ENCODE measurements at regions of chr12 and their contacts with region 1.

Region 1: DNA sequence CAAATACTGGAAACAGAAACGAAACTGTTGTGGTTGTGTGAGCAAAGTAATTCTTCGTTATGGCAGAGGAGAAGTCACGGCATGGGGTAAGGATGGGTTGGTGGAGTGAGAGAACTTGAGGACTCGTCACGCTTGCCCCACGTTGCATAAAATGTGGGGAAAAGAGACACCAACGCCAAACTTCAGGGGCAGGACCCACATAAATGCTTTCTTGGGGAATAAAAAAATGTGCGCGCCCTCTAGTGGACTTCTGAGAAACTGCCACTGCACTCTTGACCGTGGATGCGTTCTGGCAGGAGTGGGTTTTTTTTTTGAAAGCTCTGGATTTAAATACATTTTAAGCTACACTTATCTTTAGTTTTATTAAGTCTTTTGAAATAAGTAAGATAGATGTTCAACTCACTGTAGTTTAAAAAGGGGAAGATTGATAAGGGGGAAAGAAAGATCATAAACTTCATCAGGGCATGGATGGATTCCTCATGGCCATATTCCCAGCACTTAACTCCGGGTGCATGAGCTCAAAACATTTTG is 4.1 kb upstream of the IGF1 start:
- DNase-seq: peak; percentile 9 to 70 (median 41)
- ATAC-seq: peak; percentile 38
- H3K4me3 ChIP-seq: peak overlapping the region in 1 of 2 experiments; percentile 10
- H3K4me3 Mint-ChIP-seq: peak overlapping the region; percentile 78
- H3K27ac ChIP-seq: no peak overlapping the region
- H3K27ac Mint-ChIP-seq: no peak overlapping the region
- H3K4me1 ChIP-seq: peaks cover 7% of the 10 kb centered on the region
- H3K4me1 Mint-ChIP-seq: peaks cover 4% of the 10 kb centered on the region
- H3K27me3 ChIP-seq: no peaks in the 10 kb centered on the region
- H3K27me3 Mint-ChIP-seq: peaks cover 4% of the 10 kb centered on the region
- CTCF ChIP-seq: peak; percentile 99

Region 2: DNA sequence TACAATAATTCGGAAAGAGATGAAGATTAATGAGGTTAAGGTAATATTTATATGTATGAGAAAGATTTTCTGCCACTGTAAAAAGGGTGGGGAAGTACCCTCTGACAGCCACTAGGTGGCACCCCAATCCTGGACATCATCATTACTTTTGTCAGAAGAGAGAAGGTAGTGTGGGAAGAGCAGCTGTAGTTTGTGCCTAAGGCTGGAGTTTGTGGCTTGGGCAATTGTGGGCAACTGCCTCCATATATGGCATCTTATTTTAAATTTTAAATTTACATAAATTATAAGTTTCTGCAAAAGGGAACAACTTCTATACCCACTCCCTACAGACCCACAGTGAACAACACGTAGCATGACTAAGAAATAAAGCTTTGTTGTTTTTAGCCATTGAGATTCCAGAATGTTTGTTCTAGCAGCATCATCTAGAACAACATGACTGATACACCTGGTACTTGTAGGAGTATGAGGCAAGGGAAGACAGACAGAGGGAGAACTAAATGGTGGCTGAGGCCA is 710.8 kb before region 1 on chr12:
- CTCF ChIA-PET with region 1: no interaction called
- POLR2A ChIA-PET with region 1: no interaction called
- intact Hi-C with region 1: loop called in 1 of 2 experiments (anchors 10 kb)
- DNase-seq: peak; percentile 43 to 83 (median 70)
- ATAC-seq: peak; percentile 96
- H3K4me3 ChIP-seq: no peak overlapping the region
- H3K4me3 Mint-ChIP-seq: no peak overlapping the region
- H3K27ac ChIP-seq: no peak overlapping the region
- H3K27ac Mint-ChIP-seq: no peak overlapping the region
- H3K4me1 ChIP-seq: no peaks in the 10 kb centered on the region
- H3K4me1 Mint-ChIP-seq: no peaks in the 10 kb centered on the region
- H3K27me3 ChIP-seq: no peaks in the 10 kb centered on the region
- H3K27me3 Mint-ChIP-seq: no peaks in the 10 kb centered on the region
- CTCF ChIP-seq: peak; percentile 95

Region 3: DNA sequence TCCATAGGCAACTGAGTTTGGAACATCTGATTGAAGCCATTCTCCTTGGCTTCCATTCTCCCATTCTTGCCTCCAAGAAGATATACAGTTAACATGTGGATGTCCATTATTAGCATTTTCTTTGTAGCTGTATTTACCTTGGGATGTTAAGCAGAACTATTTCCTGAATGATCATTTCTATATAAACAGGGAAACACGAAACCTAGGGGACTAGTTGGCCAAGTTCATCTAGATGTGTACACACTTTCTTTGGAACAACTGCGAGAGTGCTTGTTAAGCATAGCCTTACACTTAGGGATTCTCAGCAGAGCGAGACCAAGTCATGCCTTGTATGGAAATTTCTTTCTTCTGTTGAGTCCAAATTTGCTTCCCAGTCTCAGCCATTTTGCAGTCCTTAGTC is 565.0 kb before region 1 on chr12:
- CTCF ChIA-PET with region 1: no interaction called
- POLR2A ChIA-PET with region 1: no interaction called
- intact Hi-C with region 1: loop called in 1 of 2 experiments (anchors 1 kb)
- DNase-seq: no peak
- ATAC-seq: no peak
- H3K4me3 ChIP-seq: no peak overlapping the region
- H3K4me3 Mint-ChIP-seq: no peak overlapping the region
- H3K27ac ChIP-seq: no peak overlapping the region
- H3K27ac Mint-ChIP-seq: no peak overlapping the region
- H3K4me1 ChIP-seq: no peaks in the 10 kb centered on the region
- H3K4me1 Mint-ChIP-seq: peaks cover 7% of the 10 kb centered on the region
- H3K27me3 ChIP-seq: no peaks in the 10 kb centered on the region
- H3K27me3 Mint-ChIP-seq: no peaks in the 10 kb centered on the region
- CTCF ChIP-seq: no peak

Region 4: DNA sequence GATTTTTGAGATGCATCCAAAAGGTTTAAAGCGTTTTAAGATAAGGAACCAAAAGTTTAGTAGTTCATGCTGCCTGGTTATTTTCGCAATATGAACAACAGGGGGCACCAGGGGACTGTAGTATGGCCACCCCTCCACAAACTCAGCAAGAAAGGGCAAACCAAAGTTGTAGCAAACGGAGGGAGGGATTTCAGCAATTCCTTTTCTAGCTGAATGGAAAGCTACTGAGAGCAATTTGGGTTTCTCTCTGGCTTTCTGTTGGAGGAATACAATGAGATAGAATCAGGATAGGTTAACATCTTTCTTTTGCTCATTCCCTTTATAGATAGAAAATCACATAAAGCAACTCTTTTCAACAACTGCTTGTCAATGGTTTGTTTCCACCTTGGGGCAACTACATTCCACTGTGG is 544.6 kb before region 1 on chr12:
- CTCF ChIA-PET with region 1: interaction called, 34 read pairs
- POLR2A ChIA-PET with region 1: no interaction called
- intact Hi-C with region 1: loop called (anchors 1 kb)
- DNase-seq: peak in 8 of 9 experiments; percentile 28 to 73 (median 54)
- ATAC-seq: peak; percentile 75
- H3K4me3 ChIP-seq: no peak overlapping the region
- H3K4me3 Mint-ChIP-seq: no peak overlapping the region
- H3K27ac ChIP-seq: no peak overlapping the region
- H3K27ac Mint-ChIP-seq: no peak overlapping the region
- H3K4me1 ChIP-seq: no peaks in the 10 kb centered on the region
- H3K4me1 Mint-ChIP-seq: no peaks in the 10 kb centered on the region
- H3K27me3 ChIP-seq: no peaks in the 10 kb centered on the region
- H3K27me3 Mint-ChIP-seq: peaks cover 8% of the 10 kb centered on the region
- CTCF ChIP-seq: peak; percentile 73

Region 5: DNA sequence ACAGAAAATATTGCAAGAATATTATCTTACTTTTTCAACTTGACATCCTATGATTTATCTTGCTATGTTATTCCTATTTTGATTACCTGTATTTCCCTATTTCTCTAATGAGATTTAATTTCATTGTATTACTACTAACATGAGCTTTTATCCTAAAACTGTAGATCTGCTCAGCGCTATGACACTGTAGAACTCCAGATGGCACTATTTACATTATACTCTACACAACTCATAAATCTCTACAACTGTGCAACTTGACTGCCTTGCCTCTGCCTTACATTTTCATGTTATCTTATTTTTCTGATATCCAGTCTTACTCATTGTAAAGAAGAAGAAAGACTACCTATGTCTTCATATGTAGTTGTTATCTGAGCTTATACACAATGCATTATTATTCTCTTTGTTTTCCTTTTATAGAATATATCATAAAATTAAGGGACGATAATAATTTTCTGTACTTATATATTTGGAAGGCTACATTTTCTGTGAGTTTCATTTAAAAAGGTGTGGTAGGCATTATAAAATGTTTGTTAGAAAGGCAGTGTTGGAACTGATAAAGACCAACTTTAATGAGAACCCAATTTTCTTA is 388.7 kb before region 1 on chr12:
- CTCF ChIA-PET with region 1: no interaction called
- POLR2A ChIA-PET with region 1: no interaction called
- intact Hi-C with region 1: loop called in 1 of 2 experiments (anchors 2 kb)
- DNase-seq: peak in 2 of 9 experiments; percentile 9 to 16
- ATAC-seq: no peak
- H3K4me3 ChIP-seq: no peak overlapping the region
- H3K4me3 Mint-ChIP-seq: no peak overlapping the region
- H3K27ac ChIP-seq: no peak overlapping the region
- H3K27ac Mint-ChIP-seq: no peak overlapping the region
- H3K4me1 ChIP-seq: no peaks in the 10 kb centered on the region
- H3K4me1 Mint-ChIP-seq: no peaks in the 10 kb centered on the region
- H3K27me3 ChIP-seq: no peaks in the 10 kb centered on the region
- H3K27me3 Mint-ChIP-seq: no peaks in the 10 kb centered on the region
- CTCF ChIP-seq: peak; percentile 32

Region 6: DNA sequence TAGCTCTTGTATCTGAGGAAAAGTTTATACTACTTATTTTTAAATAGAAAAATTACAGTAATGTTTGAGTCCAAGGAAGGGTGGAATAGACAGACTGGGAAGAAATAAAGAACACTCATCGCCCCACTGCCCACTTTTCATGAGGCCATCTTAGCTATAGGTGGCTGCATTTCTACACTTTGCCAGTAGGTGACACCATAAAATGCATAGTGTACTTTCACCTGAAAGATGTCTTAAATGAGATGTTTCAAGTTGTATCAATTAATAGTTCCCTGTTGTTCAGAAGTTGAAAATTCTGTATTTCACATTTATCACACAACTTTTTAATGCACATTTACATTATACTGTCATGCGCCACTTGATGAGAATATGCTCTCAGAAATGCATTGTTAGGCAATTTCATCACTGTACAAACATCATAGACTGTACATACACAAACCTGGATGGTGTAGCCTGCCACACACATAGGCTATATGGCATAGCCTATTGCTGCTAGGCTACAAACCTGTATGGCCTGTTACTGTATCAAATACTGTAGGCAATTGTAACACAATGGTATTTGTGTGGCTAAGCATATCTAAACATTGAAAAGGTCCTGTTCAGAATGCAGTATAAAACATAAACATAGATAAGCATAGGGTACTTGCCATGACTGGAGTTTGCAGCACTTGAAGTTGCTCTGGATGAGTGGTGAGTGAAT is 314.4 kb before region 1 on chr12:
- CTCF ChIA-PET with region 1: interaction called, 3 read pairs
- POLR2A ChIA-PET with region 1: no interaction called
- intact Hi-C with region 1: loop called in 1 of 2 experiments (anchors 10 kb)
- DNase-seq: peak in 3 of 9 experiments; percentile 5 to 48 (median 35)
- ATAC-seq: peak; percentile 51
- H3K4me3 ChIP-seq: no peak overlapping the region
- H3K4me3 Mint-ChIP-seq: no peak overlapping the region
- H3K27ac ChIP-seq: no peak overlapping the region
- H3K27ac Mint-ChIP-seq: no peak overlapping the region
- H3K4me1 ChIP-seq: no peaks in the 10 kb centered on the region
- H3K4me1 Mint-ChIP-seq: no peaks in the 10 kb centered on the region
- H3K27me3 ChIP-seq: no peaks in the 10 kb centered on the region
- H3K27me3 Mint-ChIP-seq: no peaks in the 10 kb centered on the region
- CTCF ChIP-seq: peak; percentile 67

Region 7: DNA sequence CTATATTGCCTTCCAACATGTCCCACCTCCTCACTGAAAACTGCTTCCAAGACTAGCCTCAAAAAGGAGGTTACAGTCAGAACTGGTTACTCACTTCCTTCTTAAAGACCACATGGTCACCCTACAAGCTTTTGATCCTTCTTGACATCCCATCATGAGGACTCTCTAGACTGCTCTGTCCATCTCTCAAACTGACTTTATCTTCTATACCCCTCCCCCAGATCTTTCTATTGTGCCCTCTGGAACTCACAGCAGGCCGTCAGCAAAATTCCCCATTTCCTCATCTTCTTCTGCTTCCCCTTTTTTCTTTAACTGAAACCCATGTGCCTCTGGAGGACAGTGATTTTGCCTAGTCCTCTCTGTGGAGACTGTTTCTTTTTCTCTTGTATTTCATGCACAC is 14.0 kb after region 1 on chr12:
- CTCF ChIA-PET with region 1: interaction called, 16 read pairs
- POLR2A ChIA-PET with region 1: no interaction called
- intact Hi-C with region 1: no loop called
- DNase-seq: peak in 1 of 9 experiments; percentile 21
- ATAC-seq: no peak
- H3K4me3 ChIP-seq: no peak overlapping the region
- H3K4me3 Mint-ChIP-seq: no peak overlapping the region
- H3K27ac ChIP-seq: no peak overlapping the region
- H3K27ac Mint-ChIP-seq: no peak overlapping the region
- H3K4me1 ChIP-seq: no peaks in the 10 kb centered on the region
- H3K4me1 Mint-ChIP-seq: no peaks in the 10 kb centered on the region
- H3K27me3 ChIP-seq: no peaks in the 10 kb centered on the region
- H3K27me3 Mint-ChIP-seq: peaks cover 16% of the 10 kb centered on the region
- CTCF ChIP-seq: no peak

Region 8: DNA sequence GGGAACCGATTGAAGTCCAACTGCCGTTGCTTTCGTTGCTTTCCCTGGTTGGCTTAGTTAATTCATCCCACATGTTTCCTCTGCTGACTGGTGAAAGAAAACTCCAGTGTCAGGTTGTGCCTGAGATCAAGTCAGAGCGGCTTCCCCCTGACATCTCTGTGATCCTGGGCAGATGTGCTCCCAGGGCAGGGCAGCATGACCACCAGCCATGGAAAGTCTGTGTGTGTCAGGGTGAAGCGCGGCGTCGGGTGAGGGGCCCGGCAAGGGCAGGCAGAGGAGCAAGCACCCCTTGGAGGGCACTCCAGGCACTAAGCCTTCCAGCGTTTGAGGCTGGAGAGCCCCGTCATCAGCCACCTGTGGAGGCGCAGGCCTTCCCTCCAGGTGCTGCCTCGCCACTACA is 50.4 kb after region 1 on chr12:
- CTCF ChIA-PET with region 1: no interaction called
- POLR2A ChIA-PET with region 1: no interaction called
- intact Hi-C with region 1: no loop called
- DNase-seq: no peak
- ATAC-seq: no peak
- H3K4me3 ChIP-seq: no peak overlapping the region
- H3K4me3 Mint-ChIP-seq: no peak overlapping the region
- H3K27ac ChIP-seq: no peak overlapping the region
- H3K27ac Mint-ChIP-seq: no peak overlapping the region
- H3K4me1 ChIP-seq: no peaks in the 10 kb centered on the region
- H3K4me1 Mint-ChIP-seq: no peaks in the 10 kb centered on the region
- H3K27me3 ChIP-seq: peaks cover 0 to 2% of the 10 kb centered on the region in 2 experiments
- H3K27me3 Mint-ChIP-seq: peaks cover 14% of the 10 kb centered on the region
- CTCF ChIP-seq: no peak